Caco-2 (cell line): ENCODE measurements at regions of chr3 and their contacts with region 1.

Region 1: GRCh38 chr3:81249540-81250029 is 511.9 kb downstream of the GBE1 start:
- DNase-seq: peak; percentile 34 to 67
- H3K4me3 ChIP-seq: no peak overlapping the region
- H3K4me3 Mint-ChIP-seq: peak overlapping the region; percentile 34
- H3K27ac Mint-ChIP-seq: peak overlapping the region; percentile 90
- H3K4me1 ChIP-seq: peaks cover 48% of the 10 kb centered on the region
- H3K4me1 Mint-ChIP-seq: peaks cover 33% of the 10 kb centered on the region
- H3K27me3 ChIP-seq: no peaks in the 10 kb centered on the region
- H3K27me3 Mint-ChIP-seq: no peaks in the 10 kb centered on the region
- CTCF ChIP-seq: no peak

Region 2: GRCh38 chr3:80836395-80836794 is 413.2 kb before region 1 on chr3:
- CTCF ChIA-PET with region 1: no interaction called
- POLR2A ChIA-PET with region 1: no interaction called
- intact Hi-C with region 1: no loop called
- DNase-seq: no peak
- H3K4me3 ChIP-seq: no peak overlapping the region
- H3K4me3 Mint-ChIP-seq: no peak overlapping the region
- H3K27ac Mint-ChIP-seq: no peak overlapping the region
- H3K4me1 ChIP-seq: no peaks in the 10 kb centered on the region
- H3K4me1 Mint-ChIP-seq: no peaks in the 10 kb centered on the region
- H3K27me3 ChIP-seq: no peaks in the 10 kb centered on the region
- H3K27me3 Mint-ChIP-seq: no peaks in the 10 kb centered on the region
- CTCF ChIP-seq: no peak

Region 3: DNA sequence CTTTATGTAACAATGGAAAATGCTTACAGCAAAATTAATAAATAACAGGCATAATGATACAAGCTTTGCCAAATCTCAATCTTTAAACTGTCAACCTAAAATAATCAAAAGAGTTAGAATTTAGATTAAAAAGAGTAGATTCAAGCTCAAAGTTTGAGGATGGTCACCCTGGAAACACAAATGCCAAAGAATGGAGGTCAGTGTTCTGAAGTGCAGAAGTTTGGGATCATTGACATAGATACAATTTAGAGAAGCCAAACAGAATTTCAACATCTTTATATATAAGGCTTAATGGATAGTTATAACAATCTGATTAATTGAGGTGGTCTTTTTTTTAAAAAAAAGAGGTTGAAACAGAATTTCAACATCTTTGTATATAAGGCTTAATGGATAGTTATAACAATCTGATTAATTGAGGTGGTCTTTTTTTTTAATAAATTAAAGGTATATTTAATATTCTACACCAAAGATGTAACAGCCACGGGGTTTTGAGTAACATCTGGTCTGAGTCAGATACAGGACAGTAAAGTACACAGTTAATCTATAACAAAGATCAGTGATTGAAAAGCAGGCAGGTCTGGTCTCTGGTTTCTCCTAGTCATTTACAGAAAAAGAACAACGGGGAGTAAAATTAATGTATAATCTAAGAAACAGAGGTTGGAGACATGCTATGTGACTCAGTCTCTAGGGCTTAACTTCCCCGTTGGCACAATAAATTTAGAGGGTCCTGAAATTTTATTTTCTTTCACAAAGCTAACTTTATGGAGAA is 21.2 kb after region 1 on chr3:
- CTCF ChIA-PET with region 1: no interaction called
- POLR2A ChIA-PET with region 1: no interaction called
- intact Hi-C with region 1: loop called (anchors 1 kb)
- DNase-seq: no peak
- H3K4me3 ChIP-seq: no peak overlapping the region
- H3K4me3 Mint-ChIP-seq: no peak overlapping the region
- H3K27ac Mint-ChIP-seq: no peak overlapping the region
- H3K4me1 ChIP-seq: peaks cover 23% of the 10 kb centered on the region
- H3K4me1 Mint-ChIP-seq: peaks cover 7% of the 10 kb centered on the region
- H3K27me3 ChIP-seq: no peaks in the 10 kb centered on the region
- H3K27me3 Mint-ChIP-seq: no peaks in the 10 kb centered on the region
- CTCF ChIP-seq: no peak

Region 4: GRCh38 chr3:81277853-81278252 is 28.3 kb after region 1 on chr3:
- CTCF ChIA-PET with region 1: no interaction called
- POLR2A ChIA-PET with region 1: no interaction called
- intact Hi-C with region 1: loop called (anchors 1 kb)
- DNase-seq: no peak
- H3K4me3 ChIP-seq: no peak overlapping the region
- H3K4me3 Mint-ChIP-seq: no peak overlapping the region
- H3K27ac Mint-ChIP-seq: peak overlapping the region; percentile 65
- H3K4me1 ChIP-seq: peaks cover 34% of the 10 kb centered on the region
- H3K4me1 Mint-ChIP-seq: peaks cover 28% of the 10 kb centered on the region
- H3K27me3 ChIP-seq: no peaks in the 10 kb centered on the region
- H3K27me3 Mint-ChIP-seq: no peaks in the 10 kb centered on the region
- CTCF ChIP-seq: no peak

Region 5: DNA sequence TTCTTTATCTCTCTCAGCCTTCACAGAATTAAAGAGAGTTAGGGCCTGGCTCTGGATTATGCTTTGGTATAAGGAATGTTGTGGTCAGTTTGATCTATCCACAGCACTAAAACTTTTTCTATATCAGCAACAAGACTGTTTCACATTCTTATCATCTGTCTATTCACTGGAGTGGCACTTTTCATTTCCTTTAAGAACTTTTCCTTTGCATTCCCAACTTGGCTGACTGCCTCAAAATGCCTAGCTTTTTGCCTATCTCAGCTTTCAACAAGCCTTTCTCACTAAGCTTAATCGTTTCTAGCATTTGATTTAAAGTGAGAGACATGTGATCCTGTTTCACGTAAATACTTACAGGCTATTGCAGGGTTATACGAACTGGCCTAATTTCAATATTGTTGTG is 40.1 kb after region 1 on chr3:
- CTCF ChIA-PET with region 1: no interaction called
- POLR2A ChIA-PET with region 1: no interaction called
- intact Hi-C with region 1: no loop called
- DNase-seq: no peak
- H3K4me3 ChIP-seq: no peak overlapping the region
- H3K4me3 Mint-ChIP-seq: no peak overlapping the region
- H3K27ac Mint-ChIP-seq: peak overlapping the region; percentile 36
- H3K4me1 ChIP-seq: no peaks in the 10 kb centered on the region; the same call in 1 of the 2 replicates
- H3K4me1 Mint-ChIP-seq: peaks cover 7% of the 10 kb centered on the region
- H3K27me3 ChIP-seq: no peaks in the 10 kb centered on the region
- H3K27me3 Mint-ChIP-seq: no peaks in the 10 kb centered on the region
- CTCF ChIP-seq: no peak